ENCODE measurements at regions of chr4 and their contacts with region 1.

Region 1: DNA sequence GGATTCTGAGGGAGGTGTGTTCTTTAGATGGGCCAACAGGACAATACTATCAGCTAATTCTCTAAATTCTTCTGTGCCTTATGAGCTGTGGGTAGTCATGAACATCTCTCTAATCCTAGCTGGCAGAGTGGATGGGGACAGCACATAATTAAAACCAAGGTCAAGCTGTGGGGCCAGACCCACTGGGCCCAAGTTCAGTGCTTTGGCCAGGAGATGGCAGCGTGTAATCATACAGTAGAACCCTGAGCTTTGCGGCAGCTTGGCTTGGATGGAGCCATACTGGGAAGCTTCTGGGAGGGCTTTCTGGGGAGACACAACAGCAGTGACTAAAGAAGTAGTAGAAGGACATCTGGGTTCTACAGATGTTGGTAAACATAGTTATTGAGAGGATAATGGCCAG is 140.3 kb upstream of the CXCL13 start:
- DNase-seq: no peak
- ATAC-seq: no peak
- H3K4me3 ChIP-seq: no peak overlapping the region
- H3K4me3 Mint-ChIP-seq: no peak overlapping the region
- H3K27ac ChIP-seq: no peak overlapping the region
- H3K27ac Mint-ChIP-seq: no peak overlapping the region
- H3K4me1 ChIP-seq: no peaks in the 10 kb centered on the region
- H3K4me1 Mint-ChIP-seq: no peaks in the 10 kb centered on the region
- H3K27me3 ChIP-seq: no peaks in the 10 kb centered on the region
- H3K27me3 Mint-ChIP-seq: peaks cover 4% of the 10 kb centered on the region
- CTCF ChIP-seq: no peak

Region 2: DNA sequence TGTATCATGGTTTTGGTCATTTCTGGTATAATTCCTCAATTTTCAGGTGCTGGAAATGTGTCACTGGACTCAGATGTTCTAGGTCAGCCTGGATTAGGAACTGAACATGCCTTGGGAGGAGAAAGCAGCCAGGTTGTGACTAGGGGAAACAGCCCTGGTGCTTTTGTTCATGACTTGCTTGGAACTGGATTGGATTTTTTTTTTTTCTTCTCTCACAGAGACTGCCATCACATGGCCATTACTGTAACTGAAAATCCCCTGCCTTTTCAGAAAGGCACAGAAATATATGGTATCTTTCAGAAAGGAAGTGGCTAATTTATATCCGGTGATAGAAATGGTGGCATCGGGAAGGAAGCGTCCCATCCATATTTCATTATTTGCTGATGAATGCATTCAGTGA is 481.1 kb before region 1 on chr4:
- CTCF ChIA-PET with region 1: no interaction called
- POLR2A ChIA-PET with region 1: no interaction called
- intact Hi-C with region 1: loop called (anchors 5 kb)
- DNase-seq: no peak
- ATAC-seq: no peak
- H3K4me3 ChIP-seq: no peak overlapping the region
- H3K4me3 Mint-ChIP-seq: no peak overlapping the region
- H3K27ac ChIP-seq: no peak overlapping the region
- H3K27ac Mint-ChIP-seq: no peak overlapping the region
- H3K4me1 ChIP-seq: peaks cover 0 to 5% of the 10 kb centered on the region in 2 donors
- H3K4me1 Mint-ChIP-seq: peaks cover 7% of the 10 kb centered on the region
- H3K27me3 ChIP-seq: no peaks in the 10 kb centered on the region
- H3K27me3 Mint-ChIP-seq: no peaks in the 10 kb centered on the region
- CTCF ChIP-seq: no peak

Region 3: GRCh38 chr4:77618383-77619122 is 153.3 kb after region 1 on chr4:
- CTCF ChIA-PET with region 1: interaction called, 13 read pairs
- POLR2A ChIA-PET with region 1: no interaction called
- intact Hi-C with region 1: no loop called
- DNase-seq: peak; percentile 65
- ATAC-seq: peak; percentile 69
- H3K4me3 ChIP-seq: no peak overlapping the region
- H3K4me3 Mint-ChIP-seq: no peak overlapping the region
- H3K27ac ChIP-seq: no peak overlapping the region
- H3K27ac Mint-ChIP-seq: no peak overlapping the region
- H3K4me1 ChIP-seq: peaks cover 0 to 3% of the 10 kb centered on the region in 2 donors
- H3K4me1 Mint-ChIP-seq: peaks cover 4% of the 10 kb centered on the region
- H3K27me3 ChIP-seq: no peaks in the 10 kb centered on the region
- H3K27me3 Mint-ChIP-seq: peaks cover 9% of the 10 kb centered on the region
- CTCF ChIP-seq: peak; percentile 93